Posterior vena cava (tissue), 2 donors: ENCODE measurements at regions of chr3 and their contacts with region 1.

Region 1: DNA sequence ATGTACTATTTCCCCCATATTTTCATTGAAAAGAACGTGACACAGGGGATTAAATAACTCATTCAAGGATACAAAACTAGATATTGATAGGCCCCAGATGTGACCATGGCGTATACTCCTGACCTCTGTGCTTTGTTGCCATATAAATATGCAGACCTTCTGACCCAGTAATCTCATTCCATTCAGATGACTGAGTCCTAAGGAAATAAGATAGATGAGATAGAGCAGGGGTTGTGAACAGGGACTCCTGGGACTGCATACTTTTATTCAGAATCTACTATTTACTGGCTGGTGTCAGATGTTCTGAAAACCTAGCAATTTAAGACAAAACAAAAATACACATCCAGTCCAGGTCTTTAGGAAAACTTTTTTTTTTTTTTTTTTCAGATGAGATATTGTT is 139.2 kb upstream of the MANF start:
- DNase-seq: no peak

Region 2: DNA sequence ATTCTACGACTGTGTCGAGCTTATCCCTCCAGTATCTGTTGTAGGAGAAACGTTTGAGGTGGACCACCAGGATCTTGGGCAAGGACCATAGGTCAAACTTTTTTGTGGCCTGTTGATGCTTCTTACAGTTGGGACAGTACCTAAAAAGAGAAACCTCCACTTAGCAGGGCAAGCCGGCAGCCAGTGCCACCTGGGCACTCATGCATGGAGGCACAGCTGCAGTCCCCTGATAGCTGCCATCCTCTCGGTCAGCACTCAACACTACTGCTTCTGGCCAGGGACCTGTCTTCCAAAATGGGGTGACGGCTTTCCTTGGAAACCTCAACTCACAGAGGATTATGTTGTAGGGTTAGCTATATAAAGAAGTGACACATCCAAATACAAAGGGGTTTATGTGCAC is 1961.9 kb before region 1 on chr3:
- intact Hi-C with region 1: no loop called
- DNase-seq: no peak

Region 3: GRCh38 chr3:51224283-51224682 is 21.6 kb before region 1 on chr3:
- intact Hi-C with region 1: no loop called
- DNase-seq: no peak

Region 4: GRCh38 chr3:51392287-51393133 is 146.6 kb after region 1 on chr3:
- intact Hi-C with region 1: no loop called
- DNase-seq: peak; percentile 81

Region 5: GRCh38 chr3:51860703-51861665 is 615.1 kb after region 1 on chr3 and contains the start of gene IQCF2:
- intact Hi-C with region 1: loop called in 1 of 2 experiments (anchors 5 kb)
- DNase-seq: no peak
- total RNA-seq, gene IQCF2: not detected

Region 6: DNA sequence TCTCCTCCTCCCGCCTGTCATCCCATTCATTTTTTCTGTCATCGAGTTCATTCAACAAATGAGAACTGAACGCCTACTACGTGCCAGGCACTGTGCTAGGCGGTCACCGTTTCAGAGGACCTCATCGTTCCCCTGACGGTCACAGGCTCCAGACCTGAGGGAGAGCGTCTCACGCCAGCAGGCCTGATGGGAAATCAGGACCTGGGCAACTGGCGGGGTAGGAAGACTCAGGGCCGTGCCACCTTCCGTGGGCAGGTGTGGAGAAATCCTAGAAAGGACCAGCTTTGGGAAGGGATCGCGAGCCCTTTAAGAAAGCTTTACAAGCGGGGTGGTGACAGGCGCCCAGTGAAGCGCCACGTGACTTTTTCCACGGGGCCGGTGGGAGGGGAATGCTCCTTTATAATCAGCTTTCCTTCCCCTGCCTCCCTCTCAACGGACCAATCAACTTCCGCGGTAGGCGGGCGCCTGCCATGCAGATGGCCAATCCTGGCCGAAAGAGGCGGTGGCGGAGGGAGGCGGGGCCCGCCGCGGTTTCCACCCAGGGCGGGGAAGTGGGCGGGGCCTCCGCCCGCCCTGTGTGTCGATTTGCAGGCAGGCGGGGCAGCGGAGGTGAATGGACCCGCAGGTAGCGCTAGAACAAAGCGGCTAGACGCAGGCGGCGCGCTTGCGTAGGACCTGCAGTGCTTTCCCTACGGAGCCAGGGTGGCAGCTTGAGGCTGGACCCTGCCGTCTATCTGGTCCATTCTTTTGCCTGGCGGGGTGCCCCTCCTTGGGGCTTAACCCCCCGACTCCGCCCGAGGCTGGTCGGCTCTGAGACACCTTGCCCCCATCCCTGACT is 811.3 kb after region 1 on chr3:
- intact Hi-C with region 1: no loop called
- DNase-seq: peak; percentile 100